Dorsolateral prefrontal cortex (tissue), 120 donors: ENCODE measurements at regions of chr2 and their contacts with region 1.

Region 1: DNA sequence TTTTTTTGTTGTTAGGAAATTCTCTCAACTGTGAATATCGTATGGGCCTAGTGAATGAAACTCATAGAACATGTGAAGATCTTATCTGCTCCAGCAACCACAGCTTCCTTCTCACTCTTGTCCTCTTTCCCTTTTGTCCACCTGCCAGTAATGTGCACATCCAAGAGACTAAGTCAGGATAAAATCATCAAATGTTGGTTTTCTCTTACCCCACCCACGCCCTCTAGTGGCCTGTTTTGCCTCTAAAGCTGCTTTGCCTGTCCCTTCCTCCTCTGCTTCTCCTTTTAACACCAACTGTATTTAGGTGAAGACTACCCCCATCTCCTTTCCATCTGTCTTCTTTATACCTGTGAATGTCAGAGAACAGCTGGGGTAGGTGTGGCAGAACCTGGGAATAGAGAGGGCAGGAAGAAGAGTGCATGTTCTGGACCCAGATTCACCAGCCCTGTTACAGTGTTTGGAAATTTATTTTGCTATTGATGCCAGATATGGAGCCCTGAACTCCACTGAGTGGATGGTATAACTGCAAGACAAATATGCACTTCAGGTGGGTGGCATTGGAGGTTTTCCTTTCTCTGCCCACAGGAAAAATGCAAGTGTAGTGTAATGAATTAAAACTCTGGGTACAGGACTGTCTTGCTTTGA is 8.4 kb upstream of the MGAT5 start:
- DNase-seq: peak in 9 of 10 donors; percentile 60 to 92 (median 80)
- H3K4me3 ChIP-seq: no peak overlapping the region
- H3K27ac ChIP-seq: peak overlapping the region in 11 of 59 donors; percentile 6 to 69 (median 33)
- H3K27me3 ChIP-seq: no peaks in the 10 kb centered on the region
- CTCF ChIP-seq: peak; percentile 52 to 93 (median 80)

Region 2: DNA sequence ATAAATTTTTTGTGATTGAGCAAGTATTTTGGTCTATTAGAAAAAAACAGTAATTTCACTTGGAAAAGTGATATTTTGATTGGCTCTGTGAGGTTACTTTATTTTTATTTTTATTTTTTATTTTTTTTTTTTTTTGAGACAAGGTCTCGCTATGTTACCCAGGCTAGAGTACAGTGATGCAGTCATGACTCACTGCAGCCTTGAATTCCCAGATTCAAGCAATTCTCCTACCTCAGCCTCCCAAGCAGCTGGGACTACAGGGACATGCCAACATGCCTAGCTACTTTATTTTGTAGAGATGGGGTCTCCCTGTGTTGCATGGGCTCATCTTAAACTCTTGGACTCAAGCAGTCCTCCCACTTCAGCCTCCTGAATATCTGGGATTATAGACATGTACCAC is 52.5 kb before region 1 on chr2:
- intact Hi-C with region 1: loop called in 1 of 2 experiments (anchors 10 kb)
- DNase-seq: no peak
- H3K4me3 ChIP-seq: no peak overlapping the region
- H3K27ac ChIP-seq: no peak overlapping the region
- H3K27me3 ChIP-seq: no peaks in the 10 kb centered on the region
- CTCF ChIP-seq: no peak

Region 3: DNA sequence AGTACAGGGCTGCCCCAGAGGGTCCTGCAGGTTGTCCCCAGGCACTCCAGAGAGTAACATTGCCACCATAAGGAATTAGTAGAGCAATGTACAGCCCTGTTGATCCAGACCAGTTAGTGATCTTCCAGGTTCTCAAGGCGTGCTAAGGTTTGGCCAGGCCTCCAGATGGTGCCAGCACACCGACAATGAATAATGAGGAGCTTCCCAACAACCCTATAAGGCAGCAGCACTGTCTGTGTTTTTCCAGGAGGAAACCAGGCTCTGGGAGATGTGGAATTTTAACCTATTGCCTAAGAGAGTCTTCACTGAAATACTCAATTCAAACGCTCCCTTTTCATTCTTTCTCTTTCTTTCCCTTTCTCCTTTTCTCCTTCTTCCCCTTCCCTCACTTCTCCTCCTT is 130.5 kb after region 1 on chr2:
- intact Hi-C with region 1: loop called in 1 of 2 experiments (anchors 5 kb)
- DNase-seq: peak; percentile 42 to 79 (median 66)
- H3K4me3 ChIP-seq: peak overlapping the region in 1 of 59 donors; percentile 2
- H3K27ac ChIP-seq: peak overlapping the region in 43 of 59 donors; percentile 4 to 87 (median 50)
- H3K27me3 ChIP-seq: no peaks in the 10 kb centered on the region
- CTCF ChIP-seq: peak in 55 of 56 donors; percentile 23 to 78 (median 51)

Region 4: GRCh38 chr2:134706587-134707329 is 461.3 kb after region 1 on chr2:
- intact Hi-C with region 1: no loop called
- DNase-seq: peak in 2 of 10 donors; percentile 9 to 53
- H3K4me3 ChIP-seq: peak overlapping the region in 31 of 59 donors; percentile 0 to 52 (median 22)
- H3K27ac ChIP-seq: peak overlapping the region in 2 of 59 donors; percentile 9 to 57
- H3K27me3 ChIP-seq: peaks cover 0 to 53% (median 0%) of the 10 kb centered on the region in 45 donors
- CTCF ChIP-seq: no peak